ENCODE measurements at regions of chr6 and their contacts with region 1.

Region 1: DNA sequence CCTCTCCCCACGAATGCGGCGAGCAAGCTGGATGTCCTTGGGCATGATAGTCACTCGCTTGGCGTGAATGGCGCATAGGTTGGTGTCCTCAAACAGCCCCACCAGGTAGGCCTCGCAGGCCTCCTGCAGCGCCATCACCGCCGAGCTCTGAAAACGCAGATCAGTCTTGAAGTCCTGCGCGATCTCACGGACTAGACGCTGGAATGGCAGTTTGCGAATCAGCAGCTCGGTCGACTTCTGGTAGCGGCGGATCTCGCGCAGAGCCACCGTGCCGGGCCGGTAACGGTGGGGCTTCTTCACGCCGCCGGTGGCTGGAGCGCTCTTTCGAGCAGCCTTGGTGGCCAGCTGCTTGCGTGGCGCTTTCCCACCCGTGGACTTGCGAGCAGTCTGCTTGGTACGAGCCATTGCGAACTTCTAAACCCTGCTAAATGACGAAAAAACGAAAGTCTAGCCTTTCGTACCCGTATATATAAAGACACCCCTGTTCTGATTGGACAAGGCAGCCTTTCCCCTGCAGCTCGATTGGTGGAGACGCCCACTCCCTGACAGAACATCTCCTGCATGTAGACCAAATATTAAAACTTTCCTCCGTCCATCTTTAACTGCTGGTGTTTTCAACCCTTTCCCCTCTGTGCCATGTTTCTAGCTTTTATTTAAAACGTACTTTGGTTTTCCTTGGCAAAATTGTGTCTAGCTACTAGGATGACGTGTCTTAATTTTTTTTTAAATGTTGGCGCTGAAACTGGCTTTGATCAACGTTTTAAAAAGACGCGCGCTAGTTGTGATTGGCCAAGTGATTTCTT is 109.8 kb downstream of the HFE start:
- DNase-seq: peak; percentile 55 to 95 (median 93)
- ATAC-seq: peak; percentile 73
- H3K4me3 ChIP-seq: peak overlapping the region; percentile 92
- H3K4me3 Mint-ChIP-seq: peak overlapping the region; percentile 85 to 99 (median 96)
- H3K27ac ChIP-seq: peak overlapping the region; percentile 91
- H3K27ac Mint-ChIP-seq: peak overlapping the region; percentile 96 to 100 (median 98)
- H3K4me1 ChIP-seq: peaks cover 10 to 12% of the 10 kb centered on the region in 2 donors
- H3K4me1 Mint-ChIP-seq: peaks cover 23 to 65% (median 42%) of the 10 kb centered on the region in 7 donors
- H3K27me3 ChIP-seq: no peaks in the 10 kb centered on the region
- H3K27me3 Mint-ChIP-seq: peaks cover 0 to 12% (median 0%) of the 10 kb centered on the region in 5 donors

Region 2: GRCh38 chr6:25981568-25982263 is 215.3 kb before region 1 on chr6:
- CTCF ChIA-PET with region 1: no interaction called
- POLR2A ChIA-PET with region 1: no interaction called
- intact Hi-C with region 1: no loop called
- DNase-seq: no peak
- ATAC-seq: no peak
- H3K4me3 ChIP-seq: no peak overlapping the region
- H3K4me3 Mint-ChIP-seq: no peak overlapping the region
- H3K27ac ChIP-seq: no peak overlapping the region
- H3K27ac Mint-ChIP-seq: peak overlapping the region in 7 of 9 donors; percentile 4 to 75 (median 37)
- H3K4me1 ChIP-seq: no peaks in the 10 kb centered on the region
- H3K4me1 Mint-ChIP-seq: peaks cover 8 to 29% (median 17%) of the 10 kb centered on the region in 7 donors
- H3K27me3 ChIP-seq: no peaks in the 10 kb centered on the region
- H3K27me3 Mint-ChIP-seq: no peaks in the 10 kb centered on the region

Region 3: GRCh38 chr6:26008470-26008869 is 188.6 kb before region 1 on chr6:
- CTCF ChIA-PET with region 1: no interaction called
- POLR2A ChIA-PET with region 1: no interaction called
- intact Hi-C with region 1: no loop called
- DNase-seq: no peak
- ATAC-seq: no peak
- H3K4me3 ChIP-seq: no peak overlapping the region
- H3K4me3 Mint-ChIP-seq: no peak overlapping the region
- H3K27ac ChIP-seq: no peak overlapping the region
- H3K27ac Mint-ChIP-seq: no peak overlapping the region
- H3K4me1 ChIP-seq: no peaks in the 10 kb centered on the region
- H3K4me1 Mint-ChIP-seq: peaks cover 0 to 15% (median 10%) of the 10 kb centered on the region in 7 donors
- H3K27me3 ChIP-seq: no peaks in the 10 kb centered on the region
- H3K27me3 Mint-ChIP-seq: no peaks in the 10 kb centered on the region

Region 4: GRCh38 chr6:26031595-26032339 is 165.3 kb before region 1 on chr6:
- CTCF ChIA-PET with region 1: interaction called, 3 read pairs
- POLR2A ChIA-PET with region 1: interaction called, 292 read pairs
- intact Hi-C with region 1: loop called in 1 of 2 experiments (anchors 1 kb)
- DNase-seq: peak; percentile 56 to 94 (median 90)
- ATAC-seq: peak; percentile 79
- H3K4me3 ChIP-seq: peak overlapping the region; percentile 70
- H3K4me3 Mint-ChIP-seq: peak overlapping the region; percentile 89 to 98 (median 96)
- H3K27ac ChIP-seq: peak overlapping the region; percentile 69
- H3K27ac Mint-ChIP-seq: peak overlapping the region; percentile 93 to 98 (median 96)
- H3K4me1 ChIP-seq: peaks cover 23 to 31% of the 10 kb centered on the region in 2 donors
- H3K4me1 Mint-ChIP-seq: peaks cover 14 to 69% (median 43%) of the 10 kb centered on the region in 7 donors
- H3K27me3 ChIP-seq: no peaks in the 10 kb centered on the region
- H3K27me3 Mint-ChIP-seq: peaks cover 0 to 7% (median 0%) of the 10 kb centered on the region in 5 donors

Region 5: DNA sequence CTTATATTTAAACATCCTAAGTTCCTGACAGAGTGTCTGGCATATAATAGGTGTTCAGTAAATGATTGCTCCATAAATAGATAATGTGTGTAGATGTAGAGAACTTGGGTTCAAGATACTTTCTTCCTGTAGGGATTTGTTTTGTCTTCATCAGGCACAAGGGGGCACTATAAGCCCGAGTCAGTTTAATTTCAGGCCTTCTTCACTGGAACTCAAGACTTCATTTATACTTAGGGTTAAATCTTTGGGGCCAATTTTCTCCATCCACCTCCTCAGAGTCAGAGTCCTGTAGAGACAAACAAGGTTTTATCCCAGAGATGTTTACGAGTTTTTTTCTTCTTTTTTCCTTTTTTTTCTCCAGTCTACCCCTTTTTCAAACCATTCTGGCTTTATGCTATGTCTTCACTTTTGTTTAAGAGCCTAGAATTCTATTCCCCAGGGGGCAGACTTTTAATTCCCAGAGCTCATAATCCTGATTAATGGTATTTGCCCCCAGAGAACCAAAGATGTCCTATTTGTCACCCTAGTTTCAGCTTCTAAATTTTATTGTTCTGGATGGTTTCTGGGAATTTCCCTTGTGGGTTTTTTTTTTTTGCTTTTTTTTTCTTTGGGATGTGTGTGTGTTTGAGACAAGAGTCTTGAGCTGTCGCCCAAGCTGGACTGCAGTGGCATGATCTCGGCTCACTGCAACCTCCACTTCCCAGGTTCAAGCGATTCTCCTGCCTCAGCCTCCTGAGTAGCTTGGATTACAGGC is 21.4 kb before region 1 on chr6:
- CTCF ChIA-PET with region 1: interaction called, 7 read pairs
- POLR2A ChIA-PET with region 1: interaction called, 2,611 read pairs
- intact Hi-C with region 1: loop called (anchors 1 kb)
- DNase-seq: peak in 7 of 9 donors; percentile 57 to 75 (median 66)
- ATAC-seq: peak; percentile 32
- H3K4me3 ChIP-seq: no peak overlapping the region
- H3K4me3 Mint-ChIP-seq: peak overlapping the region in 7 of 10 donors; percentile 15 to 63 (median 43)
- H3K27ac ChIP-seq: no peak overlapping the region
- H3K27ac Mint-ChIP-seq: peak overlapping the region; percentile 32 to 89 (median 76)
- H3K4me1 ChIP-seq: peaks cover 16 to 19% of the 10 kb centered on the region in 2 donors
- H3K4me1 Mint-ChIP-seq: peaks cover 20 to 51% (median 39%) of the 10 kb centered on the region in 7 donors
- H3K27me3 ChIP-seq: no peaks in the 10 kb centered on the region
- H3K27me3 Mint-ChIP-seq: no peaks in the 10 kb centered on the region

Region 6: DNA sequence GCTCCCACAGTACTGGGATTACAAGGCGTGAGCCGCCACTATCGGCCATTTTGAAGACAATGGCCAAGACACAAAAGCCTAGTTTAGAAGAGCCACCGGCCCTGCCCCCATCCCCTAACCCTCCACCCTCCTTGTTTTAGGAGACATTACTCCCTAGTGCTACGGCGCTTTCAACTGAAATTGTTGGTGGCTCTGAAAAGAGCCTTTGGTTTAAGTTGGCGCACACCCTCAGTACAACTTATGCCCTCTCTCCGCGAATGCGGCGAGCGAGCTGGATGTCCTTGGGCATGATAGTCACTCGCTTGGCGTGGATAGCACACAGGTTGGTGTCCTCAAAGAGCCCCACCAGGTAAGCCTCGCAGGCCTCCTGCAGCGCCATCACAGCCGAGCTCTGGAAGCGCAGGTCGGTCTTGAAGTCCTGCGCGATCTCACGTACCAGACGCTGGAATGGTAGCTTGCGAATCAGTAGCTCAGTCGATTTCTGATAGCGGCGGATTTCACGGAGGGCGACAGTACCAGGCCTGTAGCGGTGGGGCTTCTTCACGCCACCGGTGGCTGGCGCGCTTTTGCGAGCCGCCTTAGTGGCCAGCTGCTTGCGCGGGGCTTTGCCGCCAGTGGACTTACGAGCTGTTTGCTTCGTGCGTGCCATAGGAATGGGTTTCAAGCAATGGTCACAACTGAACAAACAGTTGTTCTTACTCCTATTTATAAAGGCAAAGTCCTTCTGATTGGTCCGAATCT is 53.1 kb after region 1 on chr6:
- CTCF ChIA-PET with region 1: interaction called, 3 read pairs
- POLR2A ChIA-PET with region 1: interaction called, 103 read pairs
- intact Hi-C with region 1: loop called (anchors 1 kb)
- DNase-seq: peak; percentile 53 to 85 (median 80)
- ATAC-seq: peak; percentile 85
- H3K4me3 ChIP-seq: peak overlapping the region; percentile 84
- H3K4me3 Mint-ChIP-seq: peak overlapping the region; percentile 88 to 100 (median 96)
- H3K27ac ChIP-seq: peak overlapping the region; percentile 71
- H3K27ac Mint-ChIP-seq: peak overlapping the region; percentile 85 to 97 (median 94)
- H3K4me1 ChIP-seq: peaks cover 4 to 19% of the 10 kb centered on the region in 2 donors
- H3K4me1 Mint-ChIP-seq: peaks cover 20 to 48% (median 39%) of the 10 kb centered on the region in 7 donors
- H3K27me3 ChIP-seq: no peaks in the 10 kb centered on the region
- H3K27me3 Mint-ChIP-seq: no peaks in the 10 kb centered on the region

Region 7: GRCh38 chr6:26329763-26330511 is 132.9 kb after region 1 on chr6:
- CTCF ChIA-PET with region 1: no interaction called
- POLR2A ChIA-PET with region 1: interaction called, 10 read pairs
- intact Hi-C with region 1: no loop called
- DNase-seq: peak; percentile 26 to 76 (median 69)
- ATAC-seq: peak; percentile 41
- H3K4me3 ChIP-seq: no peak overlapping the region
- H3K4me3 Mint-ChIP-seq: peak overlapping the region; percentile 35 to 97 (median 79)
- H3K27ac ChIP-seq: no peak overlapping the region
- H3K27ac Mint-ChIP-seq: peak overlapping the region; percentile 37 to 98 (median 95)
- H3K4me1 ChIP-seq: peaks cover 20 to 21% of the 10 kb centered on the region in 2 donors
- H3K4me1 Mint-ChIP-seq: peaks cover 16 to 62% (median 57%) of the 10 kb centered on the region in 7 donors
- H3K27me3 ChIP-seq: peaks cover 0 to 7% of the 10 kb centered on the region in 2 donors
- H3K27me3 Mint-ChIP-seq: peaks cover 4 to 49% (median 39%) of the 10 kb centered on the region in 5 donors

Region 8: DNA sequence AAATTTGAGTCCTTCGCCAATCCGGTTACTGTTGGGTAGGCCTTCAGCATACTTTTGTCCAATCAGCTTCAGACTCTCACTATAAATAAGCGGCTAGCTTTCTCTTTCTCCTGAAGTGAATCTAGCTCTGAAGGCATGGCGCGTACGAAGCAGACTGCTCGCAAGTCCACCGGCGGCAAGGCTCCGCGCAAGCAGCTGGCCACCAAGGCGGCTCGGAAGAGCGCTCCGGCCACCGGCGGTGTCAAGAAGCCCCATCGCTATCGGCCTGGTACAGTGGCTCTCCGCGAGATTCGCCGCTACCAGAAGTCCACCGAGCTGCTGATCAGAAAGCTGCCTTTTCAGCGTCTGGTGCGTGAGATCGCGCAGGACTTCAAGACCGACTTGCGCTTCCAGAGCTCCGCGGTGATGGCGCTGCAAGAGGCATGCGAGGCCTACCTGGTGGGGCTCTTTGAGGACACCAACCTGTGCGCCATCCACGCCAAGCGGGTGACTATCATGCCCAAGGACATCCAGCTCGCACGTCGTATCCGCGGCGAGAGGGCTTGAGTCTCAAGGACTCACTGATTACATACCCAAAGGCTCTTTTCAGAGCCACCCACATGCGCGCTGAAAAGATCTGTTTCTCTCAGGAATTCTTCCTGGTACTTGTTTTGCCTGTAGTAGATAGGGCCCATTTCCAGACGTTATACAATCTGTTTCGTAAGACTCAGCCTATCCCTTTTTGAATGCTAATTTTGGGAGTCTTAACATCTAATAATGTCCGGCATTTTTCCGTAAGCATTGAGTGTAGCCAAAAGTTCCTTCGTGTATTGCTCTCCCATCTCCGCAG is 1613.1 kb after region 1 on chr6:
- CTCF ChIA-PET with region 1: no interaction called
- POLR2A ChIA-PET with region 1: interaction called, 90 read pairs
- intact Hi-C with region 1: loop called in 1 of 2 experiments (anchors 5 kb)
- DNase-seq: peak; percentile 66 to 96 (median 92)
- ATAC-seq: peak; percentile 71
- H3K4me3 ChIP-seq: peak overlapping the region; percentile 76
- H3K4me3 Mint-ChIP-seq: peak overlapping the region; percentile 81 to 97 (median 94)
- H3K27ac ChIP-seq: peak overlapping the region; percentile 86
- H3K27ac Mint-ChIP-seq: peak overlapping the region; percentile 95 to 99 (median 98)
- H3K4me1 ChIP-seq: peaks cover 20 to 42% of the 10 kb centered on the region in 2 donors
- H3K4me1 Mint-ChIP-seq: peaks cover 18 to 82% (median 61%) of the 10 kb centered on the region in 7 donors
- H3K27me3 ChIP-seq: no peaks in the 10 kb centered on the region
- H3K27me3 Mint-ChIP-seq: peaks cover 0 to 9% (median 0%) of the 10 kb centered on the region in 5 donors